Activated CD4-positive, alpha-beta T cell treated with anti-CD3 and anti-CD28 coated beads, Interleukin-2, amount 10 ng/mL, durations not matched to agents 24 days and 14 days (primary cell): ENCODE measurements at regions of chr15 and their contacts with region 1.

Region 1: GRCh38 chr15:67815036-67815592 is 10.2 kb upstream of the SKOR1 start:
- DNase-seq: no peak
- H3K4me3 Mint-ChIP-seq: no peak overlapping the region
- H3K27ac Mint-ChIP-seq: no peak overlapping the region
- H3K4me1 Mint-ChIP-seq: no peaks in the 10 kb centered on the region
- H3K27me3 Mint-ChIP-seq: peaks cover 33% of the 10 kb centered on the region

Region 2: DNA sequence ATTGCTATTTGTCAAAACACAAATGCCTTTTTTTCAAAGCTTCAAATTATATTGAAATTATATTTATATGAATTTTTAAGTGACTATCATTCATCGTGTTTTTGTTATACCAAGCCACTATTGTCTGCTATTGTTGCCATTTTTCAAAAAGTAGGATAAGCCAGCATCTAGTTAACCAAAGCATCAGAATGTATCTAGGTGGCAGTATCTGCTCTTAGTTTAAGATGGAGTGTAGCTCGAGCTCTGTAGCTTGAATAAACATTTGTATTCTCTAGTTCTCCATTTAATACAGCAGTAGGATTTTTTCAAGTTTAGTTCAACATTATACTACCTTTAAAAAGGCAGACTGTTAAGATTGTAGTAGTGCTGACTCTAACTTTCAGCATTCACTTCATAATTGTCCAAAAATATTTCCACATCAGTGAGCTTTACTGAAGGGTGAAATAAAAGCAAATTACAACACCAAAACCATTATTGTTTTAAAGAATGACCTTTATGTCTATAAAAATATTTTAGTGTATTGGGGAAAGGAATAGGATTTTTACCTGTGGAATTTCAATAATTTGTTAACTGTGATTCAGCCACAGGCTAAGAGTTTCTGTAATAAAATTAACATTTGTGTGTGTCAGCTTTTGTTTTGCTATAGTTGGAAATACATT is 313.8 kb before region 1 on chr15:
- intact Hi-C with region 1: loop called (anchors 5 kb)
- DNase-seq: no peak
- H3K4me3 Mint-ChIP-seq: no peak overlapping the region
- H3K27ac Mint-ChIP-seq: no peak overlapping the region
- H3K4me1 Mint-ChIP-seq: peaks cover 3% of the 10 kb centered on the region
- H3K27me3 Mint-ChIP-seq: peaks cover 4% of the 10 kb centered on the region

Region 3: DNA sequence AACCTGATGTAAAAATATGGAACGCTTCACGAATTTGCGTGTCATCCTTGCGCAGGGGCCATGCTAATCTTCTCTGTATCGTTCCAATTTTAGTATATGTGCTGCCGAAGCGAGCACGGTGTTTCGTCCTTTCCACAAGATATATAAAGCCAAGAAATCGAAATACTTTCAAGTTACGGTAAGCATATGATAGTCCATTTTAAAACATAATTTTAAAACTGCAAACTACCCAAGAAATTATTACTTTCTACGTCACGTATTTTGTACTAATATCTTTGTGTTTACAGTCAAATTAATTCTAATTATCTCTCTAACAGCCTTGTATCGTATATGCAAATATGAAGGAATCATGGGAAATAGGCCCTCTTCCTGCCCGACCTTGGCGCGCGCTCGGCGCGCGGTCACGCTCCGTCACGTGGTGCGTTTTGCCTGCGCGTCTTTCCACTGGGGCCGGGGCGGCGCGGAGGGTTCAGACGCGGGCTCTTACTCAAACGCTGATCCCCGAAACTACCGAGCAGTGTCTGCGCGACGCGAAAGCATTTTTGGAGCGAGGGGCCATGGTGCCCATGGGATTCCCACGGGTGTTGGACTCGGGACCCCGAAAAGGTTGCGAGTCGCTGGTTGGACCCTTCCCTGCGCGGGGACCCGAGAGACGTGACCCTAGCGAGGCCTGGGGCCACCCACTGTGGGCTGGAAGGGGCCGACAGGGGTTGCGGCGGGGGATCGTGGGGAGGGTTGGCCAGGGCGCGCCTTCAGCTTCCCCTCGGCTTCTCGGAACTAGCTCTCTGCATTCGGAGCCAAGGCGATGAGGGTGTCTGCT is 25.0 kb after region 1 on chr15 and contains the start of gene RNU6-1:
- intact Hi-C with region 1: no loop called
- DNase-seq: peak; percentile 99
- H3K4me3 Mint-ChIP-seq: peak within 1 kb of the TSS; percentile 95
- H3K27ac Mint-ChIP-seq: peak within 1 kb of the TSS; percentile 98
- H3K4me1 Mint-ChIP-seq: peaks cover 27% of the 10 kb centered on the region
- H3K27me3 Mint-ChIP-seq: peaks cover 35% of the 10 kb centered on the region
- total RNA-seq, gene RNU6-1: not detected in 2 replicates